Cardiac septum (tissue), 1 donor: ENCODE measurements at regions of chr1 and their contacts with region 1.

Region 1: DNA sequence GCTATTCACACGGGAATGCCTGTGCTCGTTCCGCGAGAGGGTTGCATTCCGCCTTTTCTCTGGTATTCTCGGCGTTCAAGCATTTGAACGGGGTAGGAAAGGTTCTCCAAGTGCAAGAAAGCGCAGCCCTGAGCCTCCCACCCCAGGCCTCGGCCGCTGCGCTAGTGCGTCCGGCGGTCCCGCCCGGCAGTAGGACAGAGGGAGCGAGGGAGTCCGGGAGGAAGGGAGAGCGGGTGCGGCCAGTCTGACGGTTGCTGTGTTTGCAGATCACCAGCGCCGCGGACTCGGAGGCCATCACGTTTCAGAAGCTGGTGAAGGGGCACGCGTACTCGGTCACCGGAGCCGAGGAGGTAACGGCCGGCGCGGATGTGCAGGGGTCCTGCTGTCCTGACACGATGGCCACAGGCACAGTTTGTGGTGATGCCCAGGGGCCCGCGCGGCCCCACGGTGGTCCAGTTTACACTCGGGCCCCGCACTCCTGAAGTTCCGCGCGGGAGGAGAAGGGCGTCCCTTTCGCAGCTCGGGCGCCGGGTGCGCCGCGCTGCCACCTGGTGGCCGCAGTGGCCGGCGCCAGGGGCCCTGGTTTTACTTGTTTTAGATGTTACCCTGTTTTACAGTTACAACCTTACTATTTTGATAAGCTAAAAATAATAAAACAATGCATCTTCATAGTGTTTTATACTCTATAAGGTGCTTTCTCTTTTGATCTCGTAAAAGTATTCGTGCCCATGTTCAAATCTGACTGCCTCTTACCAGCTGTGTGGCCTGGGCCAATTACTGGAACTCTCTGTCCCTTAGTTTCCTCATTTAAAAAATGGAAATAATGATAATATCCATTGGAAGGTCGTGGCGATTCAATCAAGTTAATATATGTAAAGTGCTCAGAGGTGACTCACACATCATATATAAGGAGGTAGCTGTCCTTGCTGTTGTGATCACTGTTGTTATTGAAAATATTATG is 36.7 kb downstream of the CAPN2 start:
- DNase-seq: peak; percentile 91

Region 2: DNA sequence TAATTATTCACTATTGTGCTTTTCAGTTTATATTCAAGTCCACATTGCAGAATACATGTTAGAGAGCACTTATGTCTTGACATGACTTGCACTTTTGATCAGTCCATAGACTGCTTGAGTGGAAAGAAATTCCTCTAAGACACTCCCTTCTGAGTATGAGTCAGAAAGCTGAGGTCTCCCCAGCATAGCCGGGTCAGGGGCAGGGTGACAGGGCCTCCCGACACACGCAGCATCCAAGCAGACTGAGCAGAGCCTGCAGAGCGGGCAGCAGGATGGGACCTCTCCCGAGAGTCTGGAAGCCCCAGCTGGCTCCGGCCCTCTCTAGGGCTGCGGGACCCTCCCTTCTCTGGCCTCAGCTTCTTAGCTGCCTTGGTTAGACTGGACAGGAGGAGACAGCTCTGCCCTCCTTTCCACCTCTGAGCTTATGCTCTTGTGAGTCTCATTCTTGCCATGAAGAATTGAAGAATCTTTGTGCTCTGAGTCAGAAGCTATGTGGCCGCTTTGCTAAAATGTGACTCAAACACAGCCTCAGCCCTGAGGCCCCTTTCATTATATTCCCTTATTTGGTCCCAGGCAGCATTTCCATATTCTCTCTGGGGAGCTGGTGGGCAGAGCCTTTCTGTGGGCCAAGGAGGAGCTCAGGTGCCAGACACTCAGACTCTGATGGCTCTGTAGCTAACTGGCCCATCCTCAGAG is 48.0 kb before region 1 on chr1:
- intact Hi-C with region 1: loop called (anchors 2 kb)
- DNase-seq: no peak

Region 3: DNA sequence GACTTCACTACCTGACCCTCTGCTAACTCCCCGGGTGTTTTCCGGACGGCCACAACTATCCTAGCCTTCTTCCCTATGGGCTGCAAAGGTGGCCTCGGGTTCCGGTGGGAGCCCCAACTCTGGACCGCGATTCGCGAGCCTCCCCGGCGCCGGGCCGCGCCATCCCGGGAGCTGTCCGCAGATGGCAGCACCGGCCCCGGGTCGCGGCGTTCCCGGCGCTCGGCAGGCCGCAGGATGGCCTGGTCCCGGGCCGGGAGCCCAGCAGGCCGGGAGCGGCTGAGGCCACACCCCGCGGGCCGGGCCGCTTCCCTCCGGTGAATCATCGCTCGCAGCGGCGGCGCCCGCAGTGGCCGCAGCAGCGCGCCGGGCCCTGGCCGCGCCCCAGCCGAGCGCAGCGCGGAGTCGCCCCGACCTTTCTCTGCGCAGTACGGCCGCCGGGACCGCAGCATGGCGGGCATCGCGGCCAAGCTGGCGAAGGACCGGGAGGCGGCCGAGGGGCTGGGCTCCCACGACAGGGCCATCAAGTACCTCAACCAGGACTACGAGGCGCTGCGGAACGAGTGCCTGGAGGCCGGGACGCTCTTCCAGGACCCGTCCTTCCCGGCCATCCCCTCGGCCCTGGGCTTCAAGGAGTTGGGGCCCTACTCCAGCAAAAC is 36.7 kb before region 1 on chr1 and contains the start of gene CAPN2:
- intact Hi-C with region 1: loop called (anchors 1 kb)
- DNase-seq: peak; percentile 91
- total RNA-seq, gene CAPN2: 80.0 TPM

Region 4: GRCh38 chr1:223780949-223781348 is 31.9 kb after region 1 on chr1:
- intact Hi-C with region 1: no loop called
- DNase-seq: no peak

Region 5: DNA sequence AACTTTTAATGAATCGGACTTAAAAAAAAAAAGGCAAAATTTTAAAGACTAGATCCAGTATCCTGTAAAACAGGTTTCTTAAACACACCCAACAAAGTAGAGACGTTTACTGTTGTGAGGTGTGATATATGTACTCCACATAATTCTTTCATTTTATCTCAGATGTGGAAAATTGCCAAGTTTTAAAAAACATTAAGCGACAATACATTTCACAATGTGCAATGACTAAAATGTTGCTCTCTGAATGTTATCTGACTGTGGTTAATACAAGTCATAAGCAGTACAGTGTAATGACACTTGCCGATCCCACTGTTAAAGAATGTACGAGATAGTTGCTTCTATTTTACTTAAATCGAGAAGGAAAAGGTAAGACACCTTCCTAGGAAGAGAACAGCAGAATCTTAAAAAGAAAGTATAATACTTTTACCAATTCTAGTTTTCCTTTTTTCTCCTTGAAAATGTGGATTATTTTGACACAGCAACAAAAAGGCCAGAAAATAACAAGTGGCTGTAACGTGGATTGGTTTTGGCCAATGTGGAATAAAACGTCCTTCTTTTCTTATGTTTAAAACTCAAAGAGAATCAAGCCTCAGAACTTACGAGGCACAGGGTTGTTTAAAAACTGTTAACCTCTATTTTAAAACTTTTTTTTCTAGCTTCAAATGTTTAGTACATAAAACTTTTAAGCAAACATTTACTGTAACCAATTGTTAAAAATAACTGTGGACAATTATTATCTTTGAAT is 45.3 kb after region 1 on chr1:
- intact Hi-C with region 1: no loop called
- DNase-seq: no peak